ENCODE measurements at regions of chr17 and their contacts with region 1.

Region 1: GRCh38 chr17:82236142-82236981 is 7.5 kb downstream of the SLC16A3 start:
- DNase-seq: no peak
- H3K4me3 ChIP-seq: no peak overlapping the region
- H3K27ac ChIP-seq: peak overlapping the region in 1 of 2 donors; percentile 49
- H3K4me1 ChIP-seq: peaks cover 33 to 37% of the 10 kb centered on the region in 2 donors
- H3K27me3 ChIP-seq: no peaks in the 10 kb centered on the region
- CTCF ChIP-seq: peak; percentile 84 to 87 (median 85)

Region 2: GRCh38 chr17:82320956-82321927 is 84.9 kb after region 1 on chr17:
- intact Hi-C with region 1: loop called (anchors 2 kb)
- DNase-seq: no peak
- H3K4me3 ChIP-seq: no peak overlapping the region
- H3K27ac ChIP-seq: no peak overlapping the region
- H3K4me1 ChIP-seq: peaks cover 0 to 5% of the 10 kb centered on the region in 2 donors
- H3K27me3 ChIP-seq: peaks cover 7% of the 10 kb centered on the region
- CTCF ChIP-seq: peak; percentile 95 to 96 (median 96)

Measured in ascending aorta (tissue), 2 donors.